ENCODE measurements at regions of chr15 and their contacts with region 1.

Region 1: DNA sequence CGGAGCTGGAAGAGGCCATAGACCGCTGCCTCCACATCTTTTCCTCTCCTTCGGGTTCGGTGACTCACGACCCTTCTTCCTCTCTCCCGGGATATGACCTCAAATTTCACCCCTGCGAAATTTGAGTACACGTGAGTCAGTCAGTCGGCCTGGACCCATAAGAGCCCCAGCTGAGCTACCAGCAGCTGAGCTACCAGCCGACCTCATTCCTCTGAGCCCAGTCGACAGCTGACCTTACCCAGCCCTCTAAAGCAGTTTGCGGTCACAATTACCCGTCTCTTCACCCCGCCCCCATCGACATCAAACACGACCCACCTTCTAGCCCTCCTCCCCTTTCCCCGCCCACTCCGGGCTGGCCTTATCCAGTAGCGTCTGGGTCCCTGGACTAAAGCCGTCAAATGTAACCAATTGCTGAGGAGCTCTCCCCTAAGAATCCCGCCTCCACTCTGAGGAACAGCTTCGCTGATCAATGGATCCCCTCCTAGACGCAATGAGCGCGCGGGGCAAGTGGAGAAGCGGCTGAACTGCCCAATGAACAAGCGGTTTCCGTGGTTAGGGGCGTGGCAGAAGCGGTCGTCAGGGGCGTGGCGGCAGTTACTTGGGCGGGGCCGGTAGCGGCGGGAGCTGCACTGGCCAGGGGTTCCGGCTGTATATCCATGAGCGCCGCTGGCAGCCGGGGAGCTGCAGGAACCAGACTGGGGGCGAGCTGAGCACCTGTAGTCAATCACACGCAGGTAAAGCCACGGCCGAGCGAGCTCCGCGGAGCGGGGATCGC is at the start of gene ABHD2:
- DNase-seq: peak; percentile 95 to 99 (median 97)
- ATAC-seq: peak; percentile 95
- H3K4me3 ChIP-seq: peak within 1 kb of the TSS; percentile 97
- H3K4me3 Mint-ChIP-seq: no peak within 1 kb of the TSS
- H3K27ac ChIP-seq: peak within 1 kb of the TSS; percentile 49 to 55
- H3K27ac Mint-ChIP-seq: peak within 1 kb of the TSS; percentile 90
- H3K4me1 ChIP-seq: peaks cover 37% of the 10 kb centered on the region
- H3K4me1 Mint-ChIP-seq: peaks cover 30% of the 10 kb centered on the region
- H3K27me3 ChIP-seq: no peaks in the 10 kb centered on the region
- H3K27me3 Mint-ChIP-seq: no peaks in the 10 kb centered on the region
- CTCF ChIP-seq: no peak
- total RNA-seq, gene ABHD2: 36.0 to 39.2 TPM

Region 2: GRCh38 chr15:88467073-88467934 is 620.7 kb before region 1 on chr15 and contains the starts of genes MRPL46 and MRPS11:
- CTCF ChIA-PET with region 1: no interaction called
- POLR2A ChIA-PET with region 1: interaction called, 5 read pairs
- intact Hi-C with region 1: loop called in 1 of 2 experiments (anchors 5 kb)
- DNase-seq: peak; percentile 82 to 94 (median 87)
- ATAC-seq: peak; percentile 91
- H3K4me3 ChIP-seq: peak within 1 kb of the TSS; percentile 74
- H3K4me3 Mint-ChIP-seq: peak within 1 kb of the TSS; percentile 98
- H3K27ac ChIP-seq: peak within 1 kb of the TSS; percentile 80 to 96
- H3K27ac Mint-ChIP-seq: peak within 1 kb of the TSS; percentile 99
- H3K4me1 ChIP-seq: peaks cover 19% of the 10 kb centered on the region
- H3K4me1 Mint-ChIP-seq: peaks cover 43% of the 10 kb centered on the region
- H3K27me3 ChIP-seq: no peaks in the 10 kb centered on the region
- H3K27me3 Mint-ChIP-seq: no peaks in the 10 kb centered on the region
- CTCF ChIP-seq: no peak
- total RNA-seq, gene MRPL46: 8.6 to 10.2 TPM
- total RNA-seq, gene MRPS11: 8.0 to 8.4 TPM

Region 3: GRCh38 chr15:88904624-88905327 is 183.2 kb before region 1 on chr15:
- CTCF ChIA-PET with region 1: interaction called, 22 read pairs
- POLR2A ChIA-PET with region 1: interaction called, 22 read pairs
- intact Hi-C with region 1: loop called (anchors 1 to 5 kb)
- DNase-seq: peak; percentile 94 to 98 (median 96)
- ATAC-seq: peak; percentile 98
- H3K4me3 ChIP-seq: no peak overlapping the region
- H3K4me3 Mint-ChIP-seq: peak overlapping the region; percentile 17
- H3K27ac ChIP-seq: peak overlapping the region; percentile 67 to 76
- H3K27ac Mint-ChIP-seq: peak overlapping the region; percentile 93
- H3K4me1 ChIP-seq: peaks cover 43% of the 10 kb centered on the region
- H3K4me1 Mint-ChIP-seq: peaks cover 50% of the 10 kb centered on the region
- H3K27me3 ChIP-seq: no peaks in the 10 kb centered on the region
- H3K27me3 Mint-ChIP-seq: no peaks in the 10 kb centered on the region
- CTCF ChIP-seq: peak; percentile 96

Region 4: DNA sequence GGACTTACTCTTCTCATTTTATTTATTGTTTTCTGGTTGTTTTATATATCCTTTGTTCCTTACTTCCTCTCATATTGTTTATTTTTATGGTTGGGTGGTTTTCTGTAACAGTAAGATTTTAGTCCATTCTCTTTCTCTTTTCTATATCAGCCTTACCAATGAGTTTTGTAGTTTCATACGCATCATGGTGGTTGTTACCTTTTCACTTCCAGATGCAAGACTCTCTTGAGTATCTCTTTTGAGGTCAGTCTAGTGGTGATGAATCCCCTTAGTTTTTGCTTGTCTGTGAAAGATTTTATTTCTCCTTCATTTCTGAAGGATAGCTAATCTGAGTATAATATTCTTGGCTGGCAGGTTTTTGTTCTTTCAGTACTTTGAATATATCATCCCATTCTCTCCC is 117.8 kb before region 1 on chr15:
- CTCF ChIA-PET with region 1: no interaction called
- POLR2A ChIA-PET with region 1: no interaction called
- intact Hi-C with region 1: no loop called
- DNase-seq: no peak
- ATAC-seq: no peak
- H3K4me3 ChIP-seq: no peak overlapping the region
- H3K4me3 Mint-ChIP-seq: no peak overlapping the region
- H3K27ac ChIP-seq: no peak overlapping the region
- H3K27ac Mint-ChIP-seq: no peak overlapping the region
- H3K4me1 ChIP-seq: no peaks in the 10 kb centered on the region
- H3K4me1 Mint-ChIP-seq: no peaks in the 10 kb centered on the region
- H3K27me3 ChIP-seq: peaks cover 0 to 2% of the 10 kb centered on the region in 2 experiments
- H3K27me3 Mint-ChIP-seq: peaks cover 18% of the 10 kb centered on the region
- CTCF ChIP-seq: no peak

Region 5: GRCh38 chr15:89101302-89102191 is 13.5 kb after region 1 on chr15:
- CTCF ChIA-PET with region 1: interaction called, 12 read pairs
- POLR2A ChIA-PET with region 1: interaction called, 34 read pairs
- intact Hi-C with region 1: no loop called
- DNase-seq: no peak
- ATAC-seq: no peak
- H3K4me3 ChIP-seq: no peak overlapping the region
- H3K4me3 Mint-ChIP-seq: no peak overlapping the region
- H3K27ac ChIP-seq: no peak overlapping the region
- H3K27ac Mint-ChIP-seq: no peak overlapping the region
- H3K4me1 ChIP-seq: peaks cover 10% of the 10 kb centered on the region
- H3K4me1 Mint-ChIP-seq: peaks cover 33% of the 10 kb centered on the region
- H3K27me3 ChIP-seq: no peaks in the 10 kb centered on the region
- H3K27me3 Mint-ChIP-seq: no peaks in the 10 kb centered on the region
- CTCF ChIP-seq: no peak

Region 6: DNA sequence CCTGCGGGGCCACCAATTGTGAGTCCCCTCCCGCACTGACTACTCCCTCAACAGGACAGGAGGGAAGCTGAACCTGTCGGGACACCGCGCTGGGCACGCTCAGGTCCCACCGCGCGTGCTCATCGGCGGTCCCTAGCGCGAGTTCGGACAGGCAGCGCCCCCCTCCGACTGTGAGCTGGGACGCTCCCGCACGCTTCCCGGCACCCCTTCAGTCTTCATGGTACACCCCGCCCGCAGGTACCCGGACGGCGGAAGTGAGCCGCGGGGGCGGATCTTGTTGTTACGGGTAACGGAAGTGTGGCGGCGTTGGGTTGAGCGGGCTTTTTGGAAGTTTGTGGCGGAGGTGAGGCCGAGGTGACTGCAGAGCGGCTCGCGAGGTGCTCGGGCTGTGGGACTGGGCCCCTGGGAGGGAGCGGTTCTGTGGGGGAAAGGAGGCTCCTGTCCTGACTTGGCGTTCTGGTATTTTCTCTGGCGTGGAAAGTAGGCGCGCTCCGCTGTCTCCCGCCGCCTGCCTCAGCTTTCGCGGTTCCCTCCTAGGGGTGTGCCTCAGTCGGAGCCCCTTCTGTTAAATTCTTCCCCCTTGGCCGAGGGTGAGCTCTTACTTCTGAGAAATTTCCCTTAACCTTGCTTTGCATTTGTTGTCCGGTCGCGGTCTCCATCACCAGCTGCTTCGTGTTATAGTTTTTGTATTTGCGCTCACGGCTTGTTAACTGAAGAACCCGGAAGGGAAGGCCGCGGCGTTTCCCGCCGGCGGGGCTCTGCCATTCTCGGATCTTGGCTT is 155.9 kb after region 1 on chr15 and contains the start of gene FANCI:
- CTCF ChIA-PET with region 1: no interaction called
- POLR2A ChIA-PET with region 1: interaction called, 4 read pairs
- intact Hi-C with region 1: loop called in 1 of 2 experiments (anchors 2 kb)
- DNase-seq: peak; percentile 92 to 99 (median 96)
- ATAC-seq: peak; percentile 98
- H3K4me3 ChIP-seq: peak within 1 kb of the TSS; percentile 84
- H3K4me3 Mint-ChIP-seq: peak within 1 kb of the TSS; percentile 92
- H3K27ac ChIP-seq: no peak within 1 kb of the TSS
- H3K27ac Mint-ChIP-seq: peak within 1 kb of the TSS; percentile 83
- H3K4me1 ChIP-seq: peaks cover 26% of the 10 kb centered on the region
- H3K4me1 Mint-ChIP-seq: peaks cover 37% of the 10 kb centered on the region
- H3K27me3 ChIP-seq: no peaks in the 10 kb centered on the region
- H3K27me3 Mint-ChIP-seq: no peaks in the 10 kb centered on the region
- CTCF ChIP-seq: no peak
- total RNA-seq, gene FANCI: 6.1 to 7.1 TPM

Measured in CD4-positive, alpha-beta T cell (primary cell).